ENCODE measurements at regions of chr21 and their contacts with region 1.

Region 1: DNA sequence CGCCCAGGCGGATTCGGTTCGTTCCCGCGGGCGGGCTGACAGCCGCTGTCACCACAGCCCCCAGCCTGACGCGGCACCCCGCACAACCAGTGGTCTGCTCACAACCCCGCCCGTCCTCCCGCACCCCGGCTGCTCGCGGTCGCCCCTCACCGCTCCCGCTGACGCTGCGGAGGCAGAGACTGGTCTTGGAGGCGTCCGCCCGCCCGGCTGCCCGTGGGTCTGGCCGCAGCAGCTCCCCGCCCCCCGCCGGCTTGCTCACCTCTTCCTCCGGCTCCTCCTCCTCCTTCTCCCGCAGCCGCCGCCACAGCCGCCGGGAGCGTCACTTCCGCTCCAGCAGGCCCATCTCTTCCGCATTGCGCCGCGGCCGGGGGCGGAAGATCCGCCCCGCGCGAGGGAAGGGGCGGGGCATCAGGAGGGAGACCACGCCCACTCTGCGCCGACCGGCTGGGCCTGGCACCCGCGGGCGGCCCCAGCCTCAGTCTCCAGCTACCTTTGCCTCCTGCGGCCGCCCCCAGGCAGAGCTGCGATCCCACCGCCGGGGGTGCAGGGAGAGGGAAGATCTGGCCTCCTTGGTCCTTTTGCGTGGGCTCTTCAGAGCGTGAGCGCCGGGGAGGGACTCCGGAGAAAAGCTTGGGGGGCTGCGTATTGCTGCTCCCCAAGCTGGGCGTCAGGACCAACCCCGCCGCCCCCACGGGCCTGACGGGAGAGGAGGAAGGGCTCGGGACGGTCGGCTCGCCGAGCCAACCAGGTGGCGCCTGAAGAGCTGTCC is at the start of gene SYNJ1:
- DNase-seq: peak; percentile 95
- ATAC-seq: peak; percentile 92
- H3K4me3 ChIP-seq: peak within 1 kb of the TSS; percentile 77 to 92 (median 88)
- H3K4me3 Mint-ChIP-seq: peak within 1 kb of the TSS; percentile 94
- H3K27ac ChIP-seq: peak within 1 kb of the TSS; percentile 32 to 54
- H3K27ac Mint-ChIP-seq: peak within 1 kb of the TSS; percentile 82
- H3K4me1 ChIP-seq: peaks cover 13 to 18% of the 10 kb centered on the region in 2 donors
- H3K4me1 Mint-ChIP-seq: peaks cover 16% of the 10 kb centered on the region
- H3K27me3 ChIP-seq: peaks cover 0 to 4% (median 0%) of the 10 kb centered on the region in 4 experiments
- H3K27me3 Mint-ChIP-seq: no peaks in the 10 kb centered on the region
- CTCF ChIP-seq: no peak
- total RNA-seq, gene SYNJ1: 9.2 and 9.4 TPM in 2 replicates

Region 2: DNA sequence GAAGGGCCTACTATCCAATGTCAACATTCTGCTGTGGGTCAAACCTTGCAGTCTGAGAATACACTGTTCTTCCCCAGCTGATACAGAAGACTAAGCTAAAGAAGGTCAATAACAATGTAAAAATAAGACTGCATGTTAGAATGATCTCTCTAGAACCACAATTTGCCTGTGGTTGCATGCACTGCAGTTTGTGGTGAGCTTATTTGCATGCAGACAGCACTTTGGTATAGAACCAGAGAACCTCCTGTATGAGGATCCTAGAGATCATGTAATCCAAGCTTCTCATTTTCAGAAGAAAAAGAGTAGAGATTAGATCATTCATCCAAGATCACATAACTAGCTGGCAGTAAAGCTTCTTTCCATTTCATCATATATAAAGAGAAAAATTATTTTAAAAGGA is 15.8 kb before region 1 on chr21:
- CTCF ChIA-PET with region 1: interaction called, 4 read pairs
- POLR2A ChIA-PET with region 1: interaction called, 4 read pairs
- intact Hi-C with region 1: loop called (anchors 1 kb)
- DNase-seq: peak; percentile 88
- ATAC-seq: peak; percentile 96
- H3K4me3 ChIP-seq: peak overlapping the region in 1 of 5 experiments; percentile 0
- H3K4me3 Mint-ChIP-seq: peak overlapping the region; percentile 67
- H3K27ac ChIP-seq: no peak overlapping the region
- H3K27ac Mint-ChIP-seq: peak overlapping the region; percentile 61
- H3K4me1 ChIP-seq: peaks cover 22 to 30% of the 10 kb centered on the region in 2 donors
- H3K4me1 Mint-ChIP-seq: peaks cover 20% of the 10 kb centered on the region
- H3K27me3 ChIP-seq: peaks cover 2 to 60% (median 59%) of the 10 kb centered on the region in 4 experiments
- H3K27me3 Mint-ChIP-seq: peaks cover 52% of the 10 kb centered on the region
- CTCF ChIP-seq: no peak

Region 3: DNA sequence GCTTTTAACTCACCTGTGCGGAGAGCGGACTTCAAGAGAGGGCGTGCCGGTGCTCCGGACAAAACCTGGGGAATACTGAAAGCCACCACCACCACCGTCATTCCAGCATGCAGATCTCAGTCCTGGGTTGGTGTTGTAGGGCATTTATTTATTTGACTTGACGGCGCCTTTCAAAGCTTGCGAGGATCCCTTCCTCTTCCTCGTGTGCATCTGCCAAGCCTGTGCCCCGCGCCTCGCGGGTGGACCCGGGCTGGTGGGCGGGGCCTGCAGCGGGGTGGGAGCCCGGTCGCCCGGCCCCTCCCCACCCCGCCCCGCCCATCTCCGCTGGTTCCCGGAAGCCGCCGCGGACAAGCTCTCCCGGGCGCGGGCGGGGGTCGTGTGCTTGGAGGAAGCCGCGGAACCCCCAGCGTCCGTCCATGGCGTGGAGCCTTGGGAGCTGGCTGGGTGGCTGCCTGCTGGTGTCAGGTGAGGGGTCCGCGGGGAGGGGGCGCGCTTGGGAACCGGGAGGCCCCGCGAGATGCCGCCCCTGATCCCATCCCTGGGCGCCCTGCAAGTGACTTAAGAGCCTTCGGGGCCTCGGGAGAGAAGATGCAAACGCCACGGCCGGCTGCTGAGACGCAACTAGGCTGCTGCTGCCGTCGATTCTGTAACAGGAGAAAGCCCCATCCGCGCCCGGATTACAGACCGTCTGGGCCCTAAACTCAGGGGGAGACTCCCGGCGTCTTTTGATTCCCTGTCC is 538.3 kb after region 1 on chr21 and contains the start of gene IL10RB:
- CTCF ChIA-PET with region 1: no interaction called
- POLR2A ChIA-PET with region 1: no interaction called
- intact Hi-C with region 1: loop called (anchors 5 kb)
- DNase-seq: peak; percentile 87
- ATAC-seq: peak; percentile 77
- H3K4me3 ChIP-seq: peak within 1 kb of the TSS; percentile 71 to 94 (median 88)
- H3K4me3 Mint-ChIP-seq: peak within 1 kb of the TSS; percentile 98
- H3K27ac ChIP-seq: peak within 1 kb of the TSS; percentile 82 to 91
- H3K27ac Mint-ChIP-seq: peak within 1 kb of the TSS; percentile 95
- H3K4me1 ChIP-seq: peaks cover 35 to 56% of the 10 kb centered on the region in 2 donors
- H3K4me1 Mint-ChIP-seq: peaks cover 55% of the 10 kb centered on the region
- H3K27me3 ChIP-seq: no peaks in the 10 kb centered on the region
- H3K27me3 Mint-ChIP-seq: no peaks in the 10 kb centered on the region
- CTCF ChIP-seq: no peak
- total RNA-seq, gene IL10RB: 32.5 and 35.5 TPM in 2 replicates

Region 4: DNA sequence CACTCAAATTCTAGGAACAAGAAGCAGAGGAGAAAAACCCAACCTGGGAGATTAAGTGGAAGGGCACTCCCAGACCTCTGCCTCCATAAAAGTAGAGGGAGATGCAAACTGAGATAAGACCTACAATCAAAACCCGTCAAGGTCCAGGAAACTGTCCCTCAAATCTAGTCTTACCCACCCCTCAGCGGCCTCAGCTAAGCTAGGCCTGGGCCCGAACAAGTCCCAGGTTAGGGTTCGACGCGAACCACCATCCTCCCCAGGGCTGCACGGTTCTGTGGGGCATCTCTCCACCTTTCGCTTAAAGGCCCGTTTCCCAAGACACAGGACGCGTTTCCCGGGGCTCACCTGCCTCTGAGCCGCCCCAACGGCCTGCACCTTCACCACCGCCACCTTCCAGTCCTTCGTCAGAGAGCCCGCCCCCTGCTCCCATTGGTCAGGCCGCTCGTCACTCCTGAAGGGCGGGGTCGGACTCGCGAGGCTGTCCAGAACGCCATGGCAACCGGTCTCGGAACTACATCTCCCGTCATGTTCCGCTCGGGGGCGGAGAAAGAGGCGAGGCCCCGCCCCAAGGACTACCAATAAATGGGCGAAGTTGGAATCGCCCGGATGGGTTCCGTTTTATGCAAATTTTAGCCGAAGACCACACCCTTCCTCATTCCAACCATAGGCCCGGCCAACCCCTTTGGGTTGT is 913.6 kb after region 1 on chr21 and contains the start of gene CRYZL1:
- CTCF ChIA-PET with region 1: no interaction called
- POLR2A ChIA-PET with region 1: no interaction called
- intact Hi-C with region 1: loop called (anchors 5 kb)
- DNase-seq: peak; percentile 100
- ATAC-seq: peak; percentile 77
- H3K4me3 ChIP-seq: peak within 1 kb of the TSS; percentile 71 to 91 (median 79)
- H3K4me3 Mint-ChIP-seq: peak within 1 kb of the TSS; percentile 94
- H3K27ac ChIP-seq: peak within 1 kb of the TSS; percentile 84 to 90
- H3K27ac Mint-ChIP-seq: peak within 1 kb of the TSS; percentile 97
- H3K4me1 ChIP-seq: peaks cover 16 to 20% of the 10 kb centered on the region in 2 donors
- H3K4me1 Mint-ChIP-seq: peaks cover 27% of the 10 kb centered on the region
- H3K27me3 ChIP-seq: peaks cover 0 to 27% (median 19%) of the 10 kb centered on the region in 4 experiments
- H3K27me3 Mint-ChIP-seq: peaks cover 22% of the 10 kb centered on the region
- CTCF ChIP-seq: no peak
- total RNA-seq, gene CRYZL1: 60.6 and 66.9 TPM in 2 replicates

Measured in B cell (primary cell).